Activated B cell treated with CpG ODN at 0.5 μM for 24 hours (primary cell): ENCODE measurements at regions of chr2 and their contacts with region 1.

Region 1: GRCh38 chr2:96509114-96509846 is 4.1 kb upstream of the NEURL3 start:
- DNase-seq: peak; percentile 73
- ATAC-seq: peak; percentile 67
- H3K4me3 Mint-ChIP-seq: peak overlapping the region; percentile 65
- H3K27ac Mint-ChIP-seq: no peak overlapping the region
- H3K4me1 Mint-ChIP-seq: peaks cover 25% of the 10 kb centered on the region
- H3K27me3 Mint-ChIP-seq: peaks cover 7% of the 10 kb centered on the region
- CTCF ChIP-seq: peak; percentile 23

Region 2: GRCh38 chr2:96305091-96305978 is 203.9 kb before region 1 on chr2 and contains the start of gene SNRNP200:
- CTCF ChIA-PET with region 1: interaction called, 3 read pairs
- POLR2A ChIA-PET with region 1: interaction called, 4 read pairs
- intact Hi-C with region 1: loop called (anchors 1 kb)
- DNase-seq: peak; percentile 84
- ATAC-seq: peak; percentile 95
- H3K4me3 Mint-ChIP-seq: peak within 1 kb of the TSS; percentile 97
- H3K27ac Mint-ChIP-seq: peak within 1 kb of the TSS; percentile 97
- H3K4me1 Mint-ChIP-seq: peaks cover 45% of the 10 kb centered on the region
- H3K27me3 Mint-ChIP-seq: no peaks in the 10 kb centered on the region
- CTCF ChIP-seq: no peak
- total RNA-seq, gene SNRNP200: 185 and 208 TPM in 2 replicates

Region 3: DNA sequence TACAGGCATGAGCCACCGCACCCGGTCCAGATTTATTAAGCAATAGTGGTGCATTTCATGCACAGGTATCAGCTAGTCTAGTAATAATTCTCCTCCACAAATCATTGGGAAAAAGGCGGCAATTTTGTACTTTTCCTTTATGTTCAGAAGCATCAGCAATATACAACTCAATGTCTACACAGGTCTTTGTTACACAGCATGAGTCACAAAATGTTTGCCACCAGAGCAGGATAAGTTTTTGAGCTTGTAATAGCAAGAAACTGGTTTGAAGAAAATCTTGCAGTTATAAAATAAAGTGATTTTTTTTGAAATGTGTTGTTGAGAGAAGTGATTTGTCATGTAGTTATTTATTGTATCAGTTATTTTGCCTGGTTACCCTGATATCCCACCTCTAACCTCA is 189.0 kb before region 1 on chr2:
- CTCF ChIA-PET with region 1: no interaction called
- POLR2A ChIA-PET with region 1: no interaction called
- intact Hi-C with region 1: no loop called
- DNase-seq: no peak
- ATAC-seq: no peak
- H3K4me3 Mint-ChIP-seq: peak overlapping the region; percentile 94
- H3K27ac Mint-ChIP-seq: peak overlapping the region; percentile 85
- H3K4me1 Mint-ChIP-seq: peaks cover 55% of the 10 kb centered on the region
- H3K27me3 Mint-ChIP-seq: no peaks in the 10 kb centered on the region
- CTCF ChIP-seq: no peak

Region 4: GRCh38 chr2:96359310-96359709 is 150.0 kb before region 1 on chr2:
- CTCF ChIA-PET with region 1: no interaction called
- POLR2A ChIA-PET with region 1: no interaction called
- intact Hi-C with region 1: loop called (anchors 1 kb)
- DNase-seq: no peak
- ATAC-seq: peak; percentile 37
- H3K4me3 Mint-ChIP-seq: no peak overlapping the region
- H3K27ac Mint-ChIP-seq: no peak overlapping the region
- H3K4me1 Mint-ChIP-seq: no peaks in the 10 kb centered on the region
- H3K27me3 Mint-ChIP-seq: no peaks in the 10 kb centered on the region
- CTCF ChIP-seq: no peak

Region 5: DNA sequence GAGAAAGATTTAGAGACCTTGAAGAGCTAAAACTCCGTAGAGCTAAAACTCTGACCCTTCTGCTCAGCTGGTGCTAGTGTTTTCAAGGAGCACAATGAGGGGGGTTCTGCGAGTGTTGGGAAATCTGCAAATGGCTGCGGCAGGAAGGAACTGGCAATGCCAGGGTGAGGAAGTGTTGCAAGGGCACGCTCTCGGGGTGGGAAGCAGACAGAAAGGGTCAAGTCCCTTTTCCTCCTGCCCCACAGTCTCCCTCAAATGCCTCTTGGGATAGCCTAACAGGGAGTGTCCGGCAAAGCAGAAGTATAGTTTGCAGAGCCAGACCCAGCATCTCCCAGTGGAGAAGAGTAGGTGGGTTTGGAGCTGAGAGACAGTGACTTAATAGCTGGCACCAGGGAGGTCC is 113.2 kb before region 1 on chr2:
- CTCF ChIA-PET with region 1: no interaction called
- POLR2A ChIA-PET with region 1: no interaction called
- intact Hi-C with region 1: no loop called
- DNase-seq: no peak
- ATAC-seq: no peak
- H3K4me3 Mint-ChIP-seq: no peak overlapping the region
- H3K27ac Mint-ChIP-seq: no peak overlapping the region
- H3K4me1 Mint-ChIP-seq: no peaks in the 10 kb centered on the region
- H3K27me3 Mint-ChIP-seq: peaks cover 5% of the 10 kb centered on the region
- CTCF ChIP-seq: no peak

Region 6: GRCh38 chr2:96470636-96471035 is 38.6 kb before region 1 on chr2:
- CTCF ChIA-PET with region 1: interaction called, 3 read pairs
- POLR2A ChIA-PET with region 1: no interaction called
- intact Hi-C with region 1: loop called (anchors 1 kb)
- DNase-seq: peak; percentile 52
- ATAC-seq: peak; percentile 76
- H3K4me3 Mint-ChIP-seq: no peak overlapping the region
- H3K27ac Mint-ChIP-seq: no peak overlapping the region
- H3K4me1 Mint-ChIP-seq: peaks cover 7% of the 10 kb centered on the region
- H3K27me3 Mint-ChIP-seq: peaks cover 7% of the 10 kb centered on the region
- CTCF ChIP-seq: peak; percentile 50

Region 7: GRCh38 chr2:96527286-96528005 is 18.2 kb after region 1 on chr2:
- CTCF ChIA-PET with region 1: interaction called, 14 read pairs
- POLR2A ChIA-PET with region 1: interaction called, 6 read pairs
- intact Hi-C with region 1: loop called (anchors 1 kb)
- DNase-seq: peak; percentile 57
- ATAC-seq: peak; percentile 47
- H3K4me3 Mint-ChIP-seq: peak overlapping the region; percentile 83
- H3K27ac Mint-ChIP-seq: peak overlapping the region; percentile 83
- H3K4me1 Mint-ChIP-seq: peaks cover 56% of the 10 kb centered on the region
- H3K27me3 Mint-ChIP-seq: peaks cover 3% of the 10 kb centered on the region
- CTCF ChIP-seq: no peak

Region 8: DNA sequence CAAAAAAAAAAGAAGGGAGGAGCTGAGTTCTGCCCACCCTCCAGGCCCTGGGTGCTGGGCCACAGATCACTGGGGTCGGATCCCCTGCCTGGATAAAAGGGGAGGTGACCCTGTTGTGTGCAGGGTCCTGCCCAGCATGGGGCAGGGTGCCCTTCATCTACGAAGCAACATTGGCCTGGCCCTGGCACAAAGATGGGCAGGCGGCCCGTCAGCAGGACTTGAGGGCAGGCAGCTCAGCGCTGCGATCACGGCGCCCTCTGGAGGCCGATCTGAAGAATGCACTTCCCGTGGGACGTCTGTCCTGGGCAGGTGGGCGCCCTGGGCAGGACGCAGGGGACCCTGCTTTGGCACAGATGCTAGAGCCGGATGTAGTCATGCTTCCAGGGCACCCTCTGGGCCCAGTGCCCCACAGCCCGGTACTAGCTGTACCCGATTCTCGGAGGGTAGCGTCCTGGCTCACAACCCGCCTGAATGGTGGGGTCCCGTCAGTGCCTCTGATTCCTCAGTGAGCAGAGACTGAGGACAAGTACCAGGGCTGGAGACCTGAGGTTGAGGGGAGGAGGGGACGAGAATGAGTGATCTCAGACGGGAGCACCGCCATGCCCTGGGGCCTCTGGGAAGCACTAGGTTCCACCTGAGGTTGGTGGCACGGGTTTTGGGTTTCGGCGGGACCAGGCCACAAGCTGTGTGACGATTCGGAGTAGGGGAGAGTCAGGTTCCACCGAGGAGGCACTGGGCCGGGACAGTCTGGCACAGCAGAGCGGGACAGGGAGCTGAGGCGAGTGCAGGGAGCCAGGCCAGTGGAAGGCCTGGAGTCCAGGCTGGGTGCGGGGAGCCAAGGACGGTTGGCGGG is 45.2 kb after region 1 on chr2:
- CTCF ChIA-PET with region 1: interaction called, 25 read pairs
- POLR2A ChIA-PET with region 1: interaction called, 3 read pairs
- intact Hi-C with region 1: loop called (anchors 1 kb)
- DNase-seq: peak; percentile 67
- ATAC-seq: peak; percentile 85
- H3K4me3 Mint-ChIP-seq: no peak overlapping the region
- H3K27ac Mint-ChIP-seq: no peak overlapping the region
- H3K4me1 Mint-ChIP-seq: peaks cover 17% of the 10 kb centered on the region
- H3K27me3 Mint-ChIP-seq: no peaks in the 10 kb centered on the region
- CTCF ChIP-seq: peak; percentile 74